AG04449 (cell line): ENCODE measurements at regions of chr1 and their contacts with region 1.

Region 1: GRCh38 chr1:18581420-18581880 is 49.2 kb upstream of the PAX7 start:
- DNase-seq: no peak
- H3K4me3 ChIP-seq: no peak overlapping the region
- CTCF ChIP-seq: peak; percentile 79

Region 2: GRCh38 chr1:18464665-18465050 is 116.8 kb before region 1 on chr1:
- CTCF ChIA-PET with region 1: no interaction called
- POLR2A ChIA-PET with region 1: no interaction called
- DNase-seq: no peak
- H3K4me3 ChIP-seq: no peak overlapping the region
- CTCF ChIP-seq: no peak

Region 3: DNA sequence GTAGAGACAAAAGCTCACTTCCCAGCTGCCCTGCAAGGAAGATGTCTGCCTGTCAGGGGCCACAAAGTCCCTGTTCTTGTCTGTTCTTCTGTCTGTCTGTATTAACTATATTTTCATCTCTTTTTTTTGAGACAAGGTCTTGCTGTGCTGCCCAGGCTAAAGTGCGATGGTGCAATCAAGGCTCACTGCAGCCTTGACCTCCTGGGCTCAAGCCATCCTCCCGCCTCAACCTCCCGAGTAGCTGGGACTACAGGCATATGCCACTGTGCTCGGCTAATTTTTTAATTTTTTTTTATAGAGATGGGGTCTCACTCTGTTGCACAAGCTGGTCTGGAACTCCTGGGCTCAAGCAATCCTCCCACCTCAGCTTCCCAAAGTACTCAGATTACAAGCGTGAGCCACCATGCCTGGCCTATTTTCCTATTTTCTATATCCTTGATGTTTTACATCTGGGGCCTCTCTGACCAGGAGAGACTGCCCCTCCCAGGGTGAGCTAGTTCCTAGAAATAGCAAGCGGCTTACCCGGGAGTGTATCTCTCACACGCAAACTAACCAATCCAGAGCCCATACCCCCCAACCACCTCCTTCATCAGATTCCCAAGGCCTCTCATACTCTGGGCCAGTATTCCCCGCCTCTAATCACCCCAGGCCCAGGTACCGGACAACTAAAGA is 106.1 kb before region 1 on chr1:
- CTCF ChIA-PET with region 1: no interaction called
- POLR2A ChIA-PET with region 1: no interaction called
- DNase-seq: no peak
- H3K4me3 ChIP-seq: no peak overlapping the region
- CTCF ChIP-seq: no peak

Region 4: GRCh38 chr1:18556364-18556763 is 25.1 kb before region 1 on chr1:
- CTCF ChIA-PET with region 1: interaction called, 11 read pairs
- POLR2A ChIA-PET with region 1: no interaction called
- DNase-seq: no peak
- H3K4me3 ChIP-seq: no peak overlapping the region
- CTCF ChIP-seq: peak; percentile 28

Region 5: GRCh38 chr1:18868801-18869424 is 287.5 kb after region 1 on chr1:
- CTCF ChIA-PET with region 1: no interaction called
- POLR2A ChIA-PET with region 1: no interaction called
- DNase-seq: no peak
- H3K4me3 ChIP-seq: no peak overlapping the region
- CTCF ChIP-seq: no peak